A549 (cell line): ENCODE measurements at regions of chr12 and their contacts with region 1.

Region 1: DNA sequence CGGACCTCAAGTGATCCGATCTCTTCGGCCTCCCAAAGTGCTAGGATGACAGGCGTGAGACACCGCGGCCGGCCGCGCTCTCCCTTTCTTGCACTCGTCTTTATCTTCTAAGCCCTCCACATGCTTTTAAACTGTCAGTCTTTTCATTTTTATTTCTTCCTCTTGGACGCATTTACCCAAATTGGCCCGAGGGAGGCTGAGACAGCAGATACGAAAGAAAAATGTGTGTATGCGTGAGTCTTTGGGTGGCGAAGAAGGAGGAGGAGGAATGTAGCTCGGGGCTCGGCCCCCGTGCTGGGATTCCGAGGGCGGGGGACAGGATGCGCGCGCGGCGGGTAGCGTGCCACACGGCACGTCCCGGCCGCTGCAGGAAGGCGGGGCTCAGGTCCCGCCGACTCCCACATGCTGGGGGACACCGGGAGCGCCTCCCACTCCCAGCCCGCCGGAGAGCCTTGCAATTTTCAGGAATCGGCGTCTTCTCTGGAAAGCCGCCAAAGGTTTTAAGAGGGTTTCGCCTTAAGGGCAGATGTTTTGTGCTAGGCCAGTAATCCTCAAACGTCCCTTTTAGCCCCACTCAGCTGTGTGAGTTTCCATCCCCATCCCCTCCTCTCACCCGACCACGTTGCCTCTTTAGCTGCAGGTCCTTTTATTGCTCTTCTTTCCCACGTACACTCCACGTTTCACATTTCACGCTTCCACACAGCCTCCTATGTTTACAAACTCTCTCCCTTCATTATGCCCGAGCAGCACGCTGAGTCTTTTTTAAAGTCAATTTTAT is 34.7 kb upstream of the SLC2A3 start:
- DNase-seq: peak; percentile 87 to 95
- ATAC-seq: peak; percentile 99 to 100
- H3K4me3 ChIP-seq: peak overlapping the region; percentile 55
- H3K27ac ChIP-seq: peak overlapping the region; percentile 83 to 87
- H3K4me1 ChIP-seq: peaks cover 9% of the 10 kb centered on the region; the same call in 2 of the 3 replicates
- CTCF ChIP-seq: no peak
- EP300 ChIP-seq: peak in 1 of 2 experiments; percentile 63; a peak in 1 of 5 replicates
- POLR2A ChIP-seq: peak; percentile 51
- RAD21 ChIP-seq: no peak; a peak in 1 of 5 replicates

Region 2: DNA sequence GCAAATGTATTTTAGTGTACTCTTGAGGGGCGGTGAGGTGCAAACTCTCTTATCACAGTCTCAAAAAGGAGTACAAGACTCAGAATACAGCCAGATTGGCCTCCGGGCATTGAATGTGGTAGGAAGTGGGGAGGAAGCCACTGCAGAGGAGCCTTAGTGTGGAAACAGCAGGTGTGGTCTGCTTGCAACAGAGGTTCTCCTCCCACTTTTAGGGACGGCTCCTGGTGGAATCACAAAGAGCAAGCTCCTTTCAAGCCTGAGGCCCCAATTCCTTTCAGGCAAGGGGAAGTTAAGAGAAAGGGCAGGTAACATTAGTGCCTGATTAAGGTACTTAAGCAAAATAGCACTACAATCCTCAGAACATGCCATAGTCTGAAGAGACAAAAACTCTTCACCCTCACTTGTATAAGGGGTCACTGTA is 11.0 kb before region 1 on chr12:
- CTCF ChIA-PET with region 1: interaction called, 5 read pairs
- POLR2A ChIA-PET with region 1: interaction called, 12 read pairs
- DNase-seq: no peak
- ATAC-seq: peak in 1 of 2 experiments; percentile 9; a peak in 1 of 6 replicates
- H3K4me3 ChIP-seq: no peak overlapping the region; the same call in 2 of the 3 replicates
- H3K27ac ChIP-seq: peak overlapping the region; percentile 71 to 81; a peak in 5 of 6 replicates
- H3K4me1 ChIP-seq: peaks cover 20% of the 10 kb centered on the region
- CTCF ChIP-seq: no peak
- EP300 ChIP-seq: no peak
- POLR2A ChIP-seq: no peak
- RAD21 ChIP-seq: no peak